GM12878 (cell line): ENCODE measurements at regions of chr6 and their contacts with region 1.

Region 1: DNA sequence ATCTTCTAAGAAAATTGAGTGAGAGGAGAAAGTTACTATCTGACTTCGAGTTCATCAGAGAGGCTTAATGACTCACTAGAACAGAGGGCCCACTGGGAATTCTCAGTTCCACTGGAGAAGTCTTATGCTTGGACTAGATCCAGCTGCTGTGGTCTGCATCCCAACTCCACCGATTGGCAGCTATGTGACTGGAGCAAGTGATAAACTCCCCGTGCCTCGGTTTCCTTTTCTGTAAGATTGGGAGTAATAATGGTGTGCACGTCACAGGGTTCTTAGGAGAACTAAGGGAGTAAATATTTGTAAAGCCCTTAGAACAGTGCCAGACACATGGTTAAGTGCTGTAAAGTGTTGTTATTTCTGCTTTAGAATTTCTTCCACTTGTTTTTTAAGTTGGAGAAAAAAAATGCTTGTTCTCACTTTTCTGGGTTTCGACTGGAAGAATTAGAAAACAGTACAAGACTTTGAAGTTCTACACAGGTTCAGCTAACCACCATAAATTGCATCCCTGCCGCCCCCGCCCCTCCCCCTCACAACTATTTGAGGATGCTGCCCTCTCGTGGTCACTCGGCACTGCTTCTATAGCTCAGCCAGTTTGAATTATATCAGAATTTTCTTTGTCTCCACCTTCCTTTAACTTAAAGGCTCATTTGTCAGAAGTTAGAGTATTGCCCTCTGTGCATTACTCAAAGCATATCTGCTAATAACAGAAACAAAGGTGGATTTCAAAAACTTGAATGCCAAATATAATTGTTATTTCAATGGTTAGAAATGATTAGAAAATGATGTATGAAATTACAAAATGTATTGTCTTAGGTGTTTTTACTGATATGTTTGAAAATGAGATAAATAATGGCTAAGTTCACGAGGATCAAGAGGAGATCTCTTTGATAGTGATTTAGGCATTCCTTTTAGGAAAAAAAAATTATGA is 95.0 kb upstream of the IFNGR1 start:
- DNase-seq: peak; percentile 43
- ATAC-seq: peak; percentile 97
- H3K4me3 ChIP-seq: no peak overlapping the region
- H3K27ac ChIP-seq: no peak overlapping the region
- H3K4me1 ChIP-seq: peaks cover 10% of the 10 kb centered on the region
- H3K27me3 ChIP-seq: no peaks in the 10 kb centered on the region
- CTCF ChIP-seq: peak; percentile 66 to 90 (median 79)
- EP300 ChIP-seq: no peak
- POLR2A ChIP-seq: no peak
- RAD21 ChIP-seq: peak; percentile 99

Region 2: DNA sequence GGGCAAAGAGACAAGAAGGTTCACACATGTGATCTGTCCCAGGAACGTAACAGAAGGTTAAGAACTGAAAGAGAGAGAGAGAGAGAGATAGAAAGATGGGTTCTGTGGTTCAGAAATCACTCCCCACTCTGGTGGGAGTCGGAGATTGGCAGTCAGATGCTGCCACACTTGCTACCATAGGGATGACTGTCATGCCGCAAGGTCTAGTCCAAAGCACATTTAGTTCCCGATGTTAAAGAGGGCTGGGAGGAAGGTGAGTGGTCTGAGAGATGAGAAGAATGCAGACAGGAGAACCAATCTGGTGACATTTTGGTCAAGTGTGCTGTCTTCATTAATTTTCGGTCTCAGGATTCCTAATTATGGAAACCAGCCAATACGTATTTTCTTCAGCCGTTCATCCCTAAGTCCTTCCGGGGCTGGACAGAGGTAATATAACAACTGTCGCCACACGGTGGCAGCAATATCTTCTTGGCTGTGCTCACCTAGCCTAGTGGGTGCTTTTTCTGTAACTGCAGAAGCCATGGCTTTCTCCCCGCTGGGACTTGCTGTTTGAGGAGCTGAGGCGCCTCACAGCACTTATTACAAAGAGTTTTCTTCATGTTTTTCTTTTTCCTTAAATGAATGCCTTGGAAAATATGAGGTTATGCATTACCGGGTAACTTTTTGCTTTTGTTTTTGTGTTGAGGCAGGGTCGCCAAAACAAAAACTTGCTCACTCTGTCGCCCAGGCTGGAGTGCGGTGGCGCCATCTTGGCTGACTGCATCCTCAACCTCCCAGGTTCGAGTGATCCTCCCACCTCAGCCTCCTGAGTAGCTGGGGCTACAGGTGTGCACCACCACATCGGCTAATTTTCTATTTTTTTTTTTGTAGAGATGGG is 346.1 kb before region 1 on chr6:
- CTCF ChIA-PET with region 1: interaction called, 10 read pairs
- POLR2A ChIA-PET with region 1: interaction called, 7 read pairs
- RAD21 ChIA-PET with region 1: interaction called, 3 read pairs
- SMC1A ChIA-PET with region 1: interaction called, 4 read pairs
- in situ Hi-C with region 1: no loop called
- intact Hi-C with region 1: loop called (anchors 5 kb)
- DNase-seq: peak; percentile 35
- ATAC-seq: peak; percentile 99
- H3K4me3 ChIP-seq: no peak overlapping the region
- H3K27ac ChIP-seq: no peak overlapping the region
- H3K4me1 ChIP-seq: no peaks in the 10 kb centered on the region
- H3K27me3 ChIP-seq: no peaks in the 10 kb centered on the region
- CTCF ChIP-seq: peak; percentile 62 to 82 (median 71); a peak in 5 of 6 replicates
- EP300 ChIP-seq: no peak
- POLR2A ChIP-seq: no peak
- RAD21 ChIP-seq: peak; percentile 78

Region 3: DNA sequence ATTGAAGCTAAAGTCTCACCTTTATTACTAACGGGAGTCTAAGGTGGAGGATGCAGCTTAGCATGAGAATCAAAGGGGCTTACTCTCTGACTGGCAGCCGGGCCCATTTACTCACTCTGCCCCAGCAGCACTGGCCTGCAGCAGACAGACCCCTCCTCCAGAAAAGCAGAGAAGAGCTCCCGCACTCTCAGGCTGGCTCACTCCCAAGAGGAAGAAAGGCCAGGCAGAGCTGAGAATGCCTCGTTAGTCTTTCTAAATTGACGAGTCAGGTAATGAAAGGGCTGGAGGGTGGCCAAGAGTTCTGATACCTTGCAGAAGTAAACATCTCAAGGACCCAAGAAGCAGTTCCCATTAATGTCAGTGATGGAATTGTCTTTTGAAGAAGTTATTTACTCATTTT is 224.9 kb before region 1 on chr6:
- CTCF ChIA-PET with region 1: interaction called, 72 read pairs
- POLR2A ChIA-PET with region 1: interaction called, 5 read pairs
- RAD21 ChIA-PET with region 1: interaction called, 69 read pairs
- SMC1A ChIA-PET with region 1: interaction called, 80 read pairs
- in situ Hi-C with region 1: loop called (anchors 5 kb)
- intact Hi-C with region 1: loop called (anchors 1 kb)
- DNase-seq: no peak
- ATAC-seq: no peak
- H3K4me3 ChIP-seq: no peak overlapping the region
- H3K27ac ChIP-seq: no peak overlapping the region
- H3K4me1 ChIP-seq: peaks cover 39% of the 10 kb centered on the region
- H3K27me3 ChIP-seq: no peaks in the 10 kb centered on the region
- CTCF ChIP-seq: no peak
- EP300 ChIP-seq: no peak
- POLR2A ChIP-seq: no peak
- RAD21 ChIP-seq: no peak

Region 4: DNA sequence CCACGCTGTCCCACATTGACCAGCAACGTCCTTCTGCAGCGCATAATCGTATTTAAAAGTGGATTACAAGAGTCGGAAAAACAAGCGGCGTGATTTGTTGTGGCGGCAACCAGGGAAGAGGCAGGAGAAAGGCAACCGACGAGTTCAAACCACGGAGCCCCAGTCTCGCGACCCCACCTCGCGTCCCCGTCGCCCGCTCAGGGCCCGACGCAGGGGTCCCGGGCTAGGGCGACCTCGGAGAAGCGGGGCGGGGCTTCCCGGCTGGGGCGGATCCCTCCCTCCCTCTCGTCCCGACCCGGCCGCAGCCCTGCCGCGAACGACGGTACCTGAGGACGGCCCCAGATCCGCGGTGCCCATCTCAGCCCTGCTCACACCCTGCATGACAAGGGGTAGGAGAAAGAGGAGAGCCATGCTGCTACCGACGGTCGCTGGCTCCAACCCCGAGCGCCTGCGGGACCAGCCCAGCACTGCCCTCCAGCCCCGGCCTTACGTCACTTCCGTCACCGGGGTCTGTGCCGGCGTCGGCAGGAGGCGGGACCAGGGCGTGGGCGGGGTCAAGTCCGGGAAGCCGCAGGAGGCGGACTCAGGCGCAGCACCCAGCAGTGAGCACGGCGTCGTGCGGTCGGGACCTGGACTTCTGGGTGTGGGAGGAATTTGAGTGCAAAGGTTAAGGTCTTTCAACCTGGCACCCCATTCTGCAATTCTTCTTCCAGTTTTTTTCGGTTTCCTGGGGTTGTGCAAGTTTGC is 95.1 kb before region 1 on chr6 and contains the start of gene IFNGR1:
- CTCF ChIA-PET with region 1: interaction called, 6 read pairs
- POLR2A ChIA-PET with region 1: interaction called, 3 read pairs
- RAD21 ChIA-PET with region 1: interaction called, 7 read pairs
- SMC1A ChIA-PET with region 1: interaction called, 7 read pairs
- in situ Hi-C with region 1: no loop called
- intact Hi-C with region 1: loop called (anchors 2 kb)
- DNase-seq: peak; percentile 81
- ATAC-seq: peak; percentile 79
- H3K4me3 ChIP-seq: peak within 1 kb of the TSS; percentile 91
- H3K27ac ChIP-seq: peak within 1 kb of the TSS; percentile 94
- H3K4me1 ChIP-seq: peaks cover 15% of the 10 kb centered on the region
- H3K27me3 ChIP-seq: no peaks in the 10 kb centered on the region
- CTCF ChIP-seq: no peak
- EP300 ChIP-seq: no peak
- POLR2A ChIP-seq: peak; percentile 94
- RAD21 ChIP-seq: no peak
- polyA plus RNA-seq, gene IFNGR1: 182 to 296 TPM

Region 5: DNA sequence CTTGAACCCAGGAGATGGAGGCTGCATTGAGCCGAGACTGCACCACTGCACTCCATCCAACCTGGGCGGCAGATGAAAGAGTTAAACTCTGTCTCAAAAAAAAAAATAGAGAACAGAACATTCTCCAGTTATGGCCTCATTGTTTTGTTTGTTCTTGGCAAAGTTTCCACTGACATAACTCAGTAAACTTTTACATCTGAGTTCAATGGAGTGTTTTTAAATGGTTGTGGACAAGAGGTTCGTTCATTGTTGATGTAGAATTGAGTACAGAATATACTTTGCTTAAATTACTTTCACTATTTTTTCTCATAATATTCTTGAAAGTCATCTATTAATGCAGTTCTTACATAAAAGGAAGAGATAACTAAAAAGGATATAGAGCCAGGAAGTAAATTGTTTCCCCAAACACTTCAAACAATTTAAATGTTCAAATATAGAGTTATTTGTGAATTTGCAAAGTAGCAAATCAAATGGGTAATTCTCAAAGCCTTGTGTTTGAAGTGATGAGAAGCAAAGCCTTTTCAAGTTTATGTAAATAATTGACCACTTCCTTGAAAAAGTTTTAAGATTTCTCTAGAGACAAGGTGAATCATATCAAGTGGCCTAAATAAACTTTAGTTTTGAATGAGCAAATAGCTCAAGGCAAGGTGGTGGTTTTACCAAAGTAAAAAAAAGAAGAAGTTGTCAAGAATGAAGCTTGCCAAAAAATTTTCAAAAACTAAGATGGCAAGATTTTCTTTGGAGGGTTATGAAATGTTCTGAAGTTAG is 52.6 kb before region 1 on chr6:
- CTCF ChIA-PET with region 1: interaction called, 14 read pairs
- POLR2A ChIA-PET with region 1: no interaction called
- RAD21 ChIA-PET with region 1: interaction called, 4 read pairs
- SMC1A ChIA-PET with region 1: interaction called, 4 read pairs
- in situ Hi-C with region 1: no loop called
- intact Hi-C with region 1: no loop called
- DNase-seq: peak; percentile 72
- ATAC-seq: peak; percentile 77
- H3K4me3 ChIP-seq: no peak overlapping the region; the same call in 1 of the 2 replicates
- H3K27ac ChIP-seq: peak overlapping the region; percentile 54
- H3K4me1 ChIP-seq: peaks cover 13% of the 10 kb centered on the region
- H3K27me3 ChIP-seq: no peaks in the 10 kb centered on the region
- CTCF ChIP-seq: no peak
- EP300 ChIP-seq: peak; percentile 52 to 84; a peak in 3 of 4 replicates
- POLR2A ChIP-seq: no peak
- RAD21 ChIP-seq: no peak

Region 6: DNA sequence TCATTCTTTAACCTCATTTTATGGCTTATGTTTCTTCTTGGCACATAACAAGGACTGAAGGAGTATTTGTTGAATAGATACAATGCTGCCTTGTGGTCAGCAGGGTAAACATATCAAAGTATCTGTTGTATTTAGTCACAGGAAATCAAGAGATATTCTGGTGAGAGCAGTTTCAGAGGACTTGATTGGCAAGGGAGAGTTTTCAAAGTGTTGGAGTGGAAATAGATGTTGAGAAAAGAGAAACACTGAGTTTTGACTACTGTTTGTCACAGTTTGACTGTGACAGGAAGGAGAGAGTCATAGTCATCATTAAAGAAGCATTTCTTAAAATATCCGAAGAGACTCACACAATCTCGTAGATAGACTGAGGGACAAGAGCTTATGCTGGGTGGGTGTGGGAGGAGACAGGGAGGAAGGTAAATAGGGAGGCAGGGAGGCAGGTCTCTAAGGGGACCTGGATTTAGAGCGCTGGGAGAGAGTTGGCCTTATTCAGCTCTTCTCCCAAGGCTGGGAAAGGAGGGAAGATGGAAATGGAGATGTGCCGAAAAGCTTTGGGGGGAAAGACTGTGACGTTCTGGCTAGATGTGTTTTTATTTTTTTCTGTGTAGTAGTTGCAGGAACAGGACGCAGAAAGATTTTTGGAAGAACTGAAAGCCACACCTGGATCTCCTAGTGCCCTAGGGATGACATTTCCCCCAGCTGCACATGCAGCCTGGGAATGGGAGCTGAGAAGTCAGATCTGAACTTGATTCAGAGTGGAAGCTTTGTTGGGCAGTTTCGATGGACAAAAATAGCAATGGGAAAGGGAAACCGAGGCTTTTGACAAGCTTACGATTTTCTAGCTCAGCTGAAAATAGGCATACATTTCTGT is 30.0 kb before region 1 on chr6:
- CTCF ChIA-PET with region 1: interaction called, 25 read pairs
- POLR2A ChIA-PET with region 1: interaction called, 5 read pairs
- RAD21 ChIA-PET with region 1: interaction called, 22 read pairs
- SMC1A ChIA-PET with region 1: interaction called, 35 read pairs
- in situ Hi-C with region 1: no loop called
- intact Hi-C with region 1: no loop called
- DNase-seq: peak; percentile 79
- ATAC-seq: peak; percentile 88
- H3K4me3 ChIP-seq: peak overlapping the region; percentile 45; the same call in 1 of the 2 replicates
- H3K27ac ChIP-seq: peak overlapping the region; percentile 76
- H3K4me1 ChIP-seq: peaks cover 25% of the 10 kb centered on the region
- H3K27me3 ChIP-seq: no peaks in the 10 kb centered on the region
- CTCF ChIP-seq: no peak
- EP300 ChIP-seq: peak; percentile 33 to 35; a peak in 2 of 4 replicates
- POLR2A ChIP-seq: no peak
- RAD21 ChIP-seq: no peak

Region 7: GRCh38 chr6:137641474-137642077 is 327.4 kb after region 1 on chr6:
- CTCF ChIA-PET with region 1: interaction called, 8 read pairs
- POLR2A ChIA-PET with region 1: no interaction called
- RAD21 ChIA-PET with region 1: interaction called, 5 read pairs
- SMC1A ChIA-PET with region 1: interaction called, 8 read pairs
- in situ Hi-C with region 1: no loop called
- intact Hi-C with region 1: loop called (anchors 2 kb)
- DNase-seq: no peak
- ATAC-seq: peak; percentile 79
- H3K4me3 ChIP-seq: no peak overlapping the region
- H3K27ac ChIP-seq: no peak overlapping the region
- H3K4me1 ChIP-seq: peaks cover 21% of the 10 kb centered on the region
- H3K27me3 ChIP-seq: no peaks in the 10 kb centered on the region
- CTCF ChIP-seq: peak; percentile 53 to 83 (median 65)
- EP300 ChIP-seq: no peak
- POLR2A ChIP-seq: no peak
- RAD21 ChIP-seq: peak; percentile 91